Activated CD4-positive, alpha-beta T cell treated with anti-CD3 and anti-CD28 coated beads, Interleukin-2, amount 10 ng/mL, durations not matched to agents 7 days and 5 days (primary cell): ENCODE measurements at regions of chr1 and their contacts with region 1.

Region 1: GRCh38 chr1:109984456-109985275 is at the start of gene AHCYL1:
- DNase-seq: peak; percentile 100
- H3K4me3 Mint-ChIP-seq: peak within 1 kb of the TSS; percentile 89
- H3K27ac Mint-ChIP-seq: peak within 1 kb of the TSS; percentile 97
- H3K4me1 Mint-ChIP-seq: peaks cover 39% of the 10 kb centered on the region
- H3K27me3 Mint-ChIP-seq: peaks cover 2% of the 10 kb centered on the region
- total RNA-seq, gene AHCYL1: 50.4 to 50.9 TPM

Region 2: DNA sequence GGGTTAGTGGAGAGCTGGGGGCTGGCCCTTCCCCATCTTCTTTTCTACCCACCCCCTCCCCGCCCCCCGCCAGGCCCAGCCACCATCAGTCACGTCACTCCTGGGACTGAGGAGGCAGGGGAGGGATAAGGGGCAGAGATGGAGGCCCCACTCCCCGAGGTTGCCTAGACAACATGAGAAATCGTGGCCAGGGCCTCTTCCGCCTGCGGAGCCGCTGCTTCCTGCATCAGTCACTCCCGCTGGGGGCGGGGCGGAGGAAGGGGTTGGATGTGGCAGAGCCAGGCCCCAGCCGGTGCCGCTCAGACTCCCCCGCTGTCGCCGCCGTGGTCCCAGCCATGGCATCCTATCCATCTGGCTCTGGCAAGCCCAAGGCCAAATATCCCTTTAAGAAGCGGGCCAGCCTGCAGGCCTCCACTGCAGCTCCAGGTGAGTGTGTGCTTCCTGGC is 363.8 kb before region 1 on chr1:
- CTCF ChIA-PET with region 1: interaction called, 10 read pairs
- POLR2A ChIA-PET with region 1: no interaction called
- DNase-seq: peak; percentile 99
- H3K4me3 Mint-ChIP-seq: peak overlapping the region; percentile 84
- H3K27ac Mint-ChIP-seq: peak overlapping the region; percentile 94
- H3K4me1 Mint-ChIP-seq: peaks cover 71% of the 10 kb centered on the region
- H3K27me3 Mint-ChIP-seq: no peaks in the 10 kb centered on the region

Region 3: DNA sequence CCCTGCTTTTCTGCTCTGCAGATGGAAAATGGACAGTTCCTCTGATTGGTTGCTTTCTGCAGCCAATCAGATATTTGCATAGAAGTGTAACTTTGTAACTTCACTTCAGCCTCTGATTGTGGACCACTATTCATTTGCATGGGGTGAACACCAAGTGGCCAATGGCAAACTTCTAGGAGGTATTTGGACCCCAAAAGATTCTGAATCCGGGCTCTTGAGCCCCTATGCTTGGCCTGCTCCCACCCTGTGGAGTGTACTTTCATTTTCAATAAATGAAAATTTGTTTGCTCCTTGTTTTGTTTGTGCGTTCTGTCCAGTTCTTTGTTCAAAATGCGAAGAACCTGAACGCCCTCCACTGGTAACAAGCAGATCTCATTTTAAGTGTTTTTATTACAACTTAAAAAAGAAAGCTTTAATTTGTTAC is 335.2 kb before region 1 on chr1:
- CTCF ChIA-PET with region 1: interaction called, 26 read pairs
- POLR2A ChIA-PET with region 1: no interaction called
- DNase-seq: peak; percentile 5
- H3K4me3 Mint-ChIP-seq: no peak overlapping the region
- H3K27ac Mint-ChIP-seq: peak overlapping the region; percentile 46
- H3K4me1 Mint-ChIP-seq: peaks cover 6% of the 10 kb centered on the region
- H3K27me3 Mint-ChIP-seq: peaks cover 23% of the 10 kb centered on the region

Region 4: GRCh38 chr1:109750241-109750882 is 234.3 kb before region 1 on chr1:
- CTCF ChIA-PET with region 1: interaction called, 10 read pairs
- POLR2A ChIA-PET with region 1: no interaction called
- DNase-seq: no peak
- H3K4me3 Mint-ChIP-seq: no peak overlapping the region
- H3K27ac Mint-ChIP-seq: no peak overlapping the region
- H3K4me1 Mint-ChIP-seq: no peaks in the 10 kb centered on the region
- H3K27me3 Mint-ChIP-seq: peaks cover 16% of the 10 kb centered on the region

Region 5: GRCh38 chr1:109773146-109773899 is 211.3 kb before region 1 on chr1:
- CTCF ChIA-PET with region 1: interaction called, 475 read pairs
- POLR2A ChIA-PET with region 1: interaction called, 10 read pairs
- DNase-seq: peak; percentile 82
- H3K4me3 Mint-ChIP-seq: no peak overlapping the region
- H3K27ac Mint-ChIP-seq: no peak overlapping the region
- H3K4me1 Mint-ChIP-seq: peaks cover 20% of the 10 kb centered on the region
- H3K27me3 Mint-ChIP-seq: peaks cover 13% of the 10 kb centered on the region

Region 6: DNA sequence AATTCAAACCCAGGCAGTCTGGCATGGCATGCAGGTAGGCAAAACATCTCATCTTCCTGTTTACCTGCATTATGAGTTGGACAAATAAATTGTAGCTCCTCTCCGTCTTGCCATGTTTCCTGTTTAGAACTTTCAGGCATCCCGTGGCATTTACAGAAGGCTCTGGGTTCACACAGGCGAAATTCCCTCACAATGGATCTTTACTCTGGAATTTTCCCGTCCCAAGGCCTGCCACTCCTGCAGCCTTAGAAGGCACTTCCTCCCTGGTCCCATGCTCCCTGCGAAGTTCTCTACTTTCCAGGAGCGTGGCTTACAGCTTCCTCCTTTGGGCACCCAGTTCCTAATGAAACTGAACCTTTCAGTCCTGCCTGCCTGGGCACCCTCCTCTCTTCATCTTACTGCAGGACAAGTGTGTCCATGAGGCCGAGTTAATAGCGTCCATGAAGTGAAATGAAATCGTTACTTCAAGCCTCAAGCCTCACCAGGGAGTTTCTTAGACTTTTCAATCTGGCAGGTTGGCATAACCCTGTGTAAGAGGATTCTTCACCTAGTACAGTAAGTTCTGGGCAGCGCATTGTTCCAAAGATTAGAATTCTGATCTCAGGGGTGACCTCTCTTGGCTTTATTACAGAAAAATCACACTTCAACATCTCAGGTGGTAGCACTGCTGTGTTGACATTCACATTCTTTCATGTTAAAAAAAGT is 36.9 kb before region 1 on chr1:
- CTCF ChIA-PET with region 1: interaction called, 10 read pairs
- POLR2A ChIA-PET with region 1: no interaction called
- DNase-seq: no peak
- H3K4me3 Mint-ChIP-seq: no peak overlapping the region
- H3K27ac Mint-ChIP-seq: no peak overlapping the region
- H3K4me1 Mint-ChIP-seq: peaks cover 4% of the 10 kb centered on the region
- H3K27me3 Mint-ChIP-seq: no peaks in the 10 kb centered on the region

Region 7: DNA sequence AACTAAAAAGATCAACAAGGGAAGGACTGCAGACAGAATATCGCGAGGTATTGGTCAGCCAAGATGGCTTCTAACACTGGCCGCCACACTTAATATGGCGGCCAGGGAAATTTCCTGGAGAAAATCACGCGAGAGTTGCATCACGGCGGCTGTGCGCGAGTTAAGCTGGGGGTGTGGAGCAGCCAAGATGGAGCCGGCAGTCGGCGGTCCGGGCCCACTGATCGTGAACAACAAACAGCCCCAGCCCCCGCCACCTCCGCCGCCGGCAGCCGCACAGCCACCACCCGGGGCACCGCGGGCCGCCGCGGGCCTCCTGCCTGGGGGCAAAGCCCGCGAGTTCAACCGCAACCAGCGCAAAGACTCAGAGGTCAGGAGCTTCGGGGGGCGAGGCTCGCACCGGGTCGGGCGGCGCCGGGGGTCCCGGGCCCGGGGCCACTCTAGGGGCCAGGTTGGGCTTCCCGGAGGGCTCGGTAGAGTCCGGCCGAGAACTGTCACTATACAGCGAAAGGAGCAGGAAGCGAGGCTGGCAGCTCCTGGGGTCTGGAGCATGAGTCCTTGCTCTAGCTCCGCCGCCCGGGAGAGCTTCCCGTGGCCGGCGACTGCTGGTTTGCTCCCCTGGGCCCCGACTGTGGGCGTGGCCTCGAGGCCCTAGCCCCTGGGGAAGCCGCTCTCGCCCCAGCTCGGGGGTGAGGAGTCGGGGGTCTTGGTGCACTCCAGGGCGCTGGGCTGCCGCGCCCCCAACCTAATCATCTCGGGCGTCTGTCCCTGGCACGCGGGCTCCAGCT is 50.0 kb after region 1 on chr1 and contains the start of gene STRIP1:
- CTCF ChIA-PET with region 1: interaction called, 10 read pairs
- POLR2A ChIA-PET with region 1: no interaction called
- DNase-seq: peak; percentile 96
- H3K4me3 Mint-ChIP-seq: peak within 1 kb of the TSS; percentile 91
- H3K27ac Mint-ChIP-seq: peak within 1 kb of the TSS; percentile 93
- H3K4me1 Mint-ChIP-seq: peaks cover 65% of the 10 kb centered on the region
- H3K27me3 Mint-ChIP-seq: no peaks in the 10 kb centered on the region
- total RNA-seq, gene STRIP1: 33.4 to 35.9 TPM